ENCODE measurements at regions of chr15 and their contacts with region 1.

Region 1: DNA sequence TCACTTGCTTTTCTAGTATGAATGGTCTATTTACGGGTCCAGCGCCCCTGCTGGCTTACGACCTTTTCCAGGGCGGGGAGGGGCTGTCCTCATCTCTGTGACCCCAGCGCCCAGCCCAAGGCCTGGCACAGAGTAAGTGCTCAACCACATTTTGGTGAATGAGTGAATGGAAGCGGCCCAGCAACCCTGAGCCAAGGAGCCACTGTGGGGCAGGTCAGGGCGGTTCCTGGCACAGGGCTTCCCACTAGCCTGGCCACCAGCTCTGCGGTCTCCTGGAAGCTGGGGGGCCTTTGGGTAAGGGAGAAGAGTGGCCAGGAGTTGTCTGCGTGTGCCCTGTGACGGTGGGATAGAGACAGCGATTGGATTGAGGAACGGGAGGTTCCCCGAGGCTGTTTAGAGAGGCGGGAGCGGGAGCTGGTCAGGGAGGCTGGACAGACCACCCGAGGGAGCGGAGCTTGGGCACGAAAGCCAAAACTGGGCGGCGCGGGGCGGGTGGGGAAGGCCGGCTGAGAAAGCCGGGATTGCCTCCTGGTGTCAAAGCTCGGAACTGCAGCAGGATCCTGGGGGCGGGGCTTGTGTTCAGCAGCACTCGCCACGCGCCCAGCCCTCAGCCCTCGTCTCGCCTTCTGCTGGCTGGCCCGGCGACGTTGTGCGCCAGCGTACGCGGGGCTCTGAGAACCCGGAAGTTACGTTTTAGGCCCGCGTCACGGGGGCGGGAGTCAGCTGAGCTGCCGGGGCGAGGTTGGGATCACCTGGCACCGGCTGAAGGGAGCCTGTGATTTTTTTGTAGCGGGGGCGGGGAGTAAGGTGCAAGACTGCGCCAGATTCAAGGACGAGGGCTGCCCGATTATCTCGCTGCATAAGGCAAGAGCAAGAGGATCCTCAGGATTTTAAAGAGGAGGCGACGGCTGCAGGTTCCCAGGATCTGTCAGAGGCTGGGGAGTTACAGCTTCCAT is at the start of gene VPS18:
- DNase-seq: peak; percentile 97 to 98
- ATAC-seq: peak; percentile 88 to 95
- H3K4me3 ChIP-seq: peak within 1 kb of the TSS; percentile 85 to 94 (median 92)
- H3K27ac ChIP-seq: peak within 1 kb of the TSS; percentile 91 to 98 (median 98)
- H3K4me1 ChIP-seq: peaks cover 13 to 17% of the 10 kb centered on the region in 2 donors
- H3K27me3 ChIP-seq: no peaks in the 10 kb centered on the region
- CTCF ChIP-seq: peak; percentile 97 to 99 (median 99)
- POLR2A ChIP-seq: peak; percentile 90 to 92
- total RNA-seq, gene VPS18: 18.5 to 26.1 (median 19.3) TPM

Region 2: DNA sequence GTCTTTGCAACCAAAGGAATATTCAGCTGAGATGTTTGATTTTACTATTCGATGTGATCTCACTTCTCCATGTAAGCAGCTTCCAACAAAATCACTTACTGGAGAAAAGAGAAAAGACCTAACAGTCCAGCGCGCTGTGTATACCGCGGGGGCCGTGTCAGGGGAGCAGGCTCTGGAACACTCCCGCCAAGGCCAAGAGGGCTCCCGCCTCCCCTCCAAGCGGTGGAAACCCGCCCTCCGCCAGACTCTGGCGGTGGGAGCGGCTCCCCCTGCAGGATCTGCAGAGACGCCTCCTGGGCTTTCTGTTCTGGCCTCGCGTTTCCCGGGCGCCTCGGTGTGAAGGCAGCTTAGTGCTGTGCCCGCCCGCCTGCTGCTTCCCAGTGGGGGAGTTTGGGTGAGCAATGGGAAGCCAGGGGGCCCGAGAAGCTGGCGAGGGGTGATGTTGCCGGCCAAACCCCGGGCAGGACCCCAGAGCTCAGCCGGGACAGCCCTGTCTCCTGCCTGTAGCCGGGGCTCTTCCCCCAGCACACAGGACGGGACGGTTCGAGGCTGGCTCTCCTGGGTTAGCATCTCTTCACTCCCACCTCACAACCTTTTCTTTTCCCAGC is 386.9 kb before region 1 on chr15:
- in situ Hi-C with region 1: loop called in 1 of 4 experiments (anchors 25 kb)
- intact Hi-C with region 1: no loop called
- DNase-seq: peak; percentile 42 to 56
- ATAC-seq: peak; percentile 53 to 71
- H3K4me3 ChIP-seq: peak overlapping the region; percentile 35 to 52 (median 44)
- H3K27ac ChIP-seq: peak overlapping the region in 2 of 4 donors; percentile 33 to 35
- H3K4me1 ChIP-seq: peaks cover 6 to 20% of the 10 kb centered on the region in 2 donors
- H3K27me3 ChIP-seq: no peaks in the 10 kb centered on the region
- CTCF ChIP-seq: peak; percentile 21 to 85 (median 48)
- POLR2A ChIP-seq: no peak

Region 3: DNA sequence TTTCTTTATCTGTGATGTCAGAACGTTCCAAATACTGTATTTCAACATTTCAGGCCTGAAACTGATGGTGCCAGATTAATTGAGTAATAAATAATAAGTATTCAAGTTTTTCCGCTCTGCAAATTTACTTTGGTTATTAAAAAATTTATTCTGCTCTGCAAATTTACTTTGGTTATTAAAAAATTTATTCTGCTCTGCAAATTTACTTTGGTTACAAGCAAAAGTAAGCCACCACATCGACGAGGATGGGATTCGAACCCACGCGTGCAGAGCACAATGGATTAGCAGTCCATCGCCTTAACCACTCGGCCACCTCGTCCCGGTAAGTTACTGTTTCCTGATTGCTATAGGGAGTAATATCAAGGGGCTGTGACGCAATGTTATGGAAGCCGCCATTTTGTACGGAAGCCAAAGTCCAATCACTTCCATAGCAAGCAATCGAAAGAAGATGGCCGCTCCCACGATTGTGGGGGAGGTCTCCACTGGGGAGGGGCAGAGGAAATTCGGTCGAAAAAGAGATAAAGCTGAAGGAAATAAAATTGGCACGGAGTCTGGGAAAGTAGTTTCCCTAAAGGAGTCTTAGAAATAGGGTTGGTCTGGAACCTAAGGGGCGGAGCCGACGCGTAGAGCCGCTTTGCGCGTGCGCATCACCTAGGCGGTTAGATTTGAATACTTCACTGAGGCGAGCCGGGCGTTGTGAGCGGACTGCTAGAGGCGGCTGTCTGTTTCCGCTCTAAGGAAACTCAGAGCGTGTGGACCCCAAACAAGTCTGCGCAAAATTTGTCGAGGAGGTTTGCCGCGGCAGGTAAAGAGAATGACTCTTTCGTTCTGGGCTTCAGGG is 300.2 kb before region 1 on chr15 and contains the start of gene KNL1:
- in situ Hi-C with region 1: loop called in 2 of 4 experiments (anchors 10 kb)
- intact Hi-C with region 1: loop called (anchors 5 kb)
- DNase-seq: peak; percentile 83 to 91
- ATAC-seq: peak; percentile 97 to 98
- H3K4me3 ChIP-seq: peak within 1 kb of the TSS; percentile 72 to 88 (median 82)
- H3K27ac ChIP-seq: peak within 1 kb of the TSS; percentile 88 to 97 (median 93)
- H3K4me1 ChIP-seq: peaks cover 9% of the 10 kb centered on the region in 2 donors
- H3K27me3 ChIP-seq: no peaks in the 10 kb centered on the region
- CTCF ChIP-seq: no peak
- POLR2A ChIP-seq: no peak
- total RNA-seq, gene KNL1: 0.10 to 0.33 (median 0.33) TPM in 3 of 4 donors, not detected in the other

Region 4: DNA sequence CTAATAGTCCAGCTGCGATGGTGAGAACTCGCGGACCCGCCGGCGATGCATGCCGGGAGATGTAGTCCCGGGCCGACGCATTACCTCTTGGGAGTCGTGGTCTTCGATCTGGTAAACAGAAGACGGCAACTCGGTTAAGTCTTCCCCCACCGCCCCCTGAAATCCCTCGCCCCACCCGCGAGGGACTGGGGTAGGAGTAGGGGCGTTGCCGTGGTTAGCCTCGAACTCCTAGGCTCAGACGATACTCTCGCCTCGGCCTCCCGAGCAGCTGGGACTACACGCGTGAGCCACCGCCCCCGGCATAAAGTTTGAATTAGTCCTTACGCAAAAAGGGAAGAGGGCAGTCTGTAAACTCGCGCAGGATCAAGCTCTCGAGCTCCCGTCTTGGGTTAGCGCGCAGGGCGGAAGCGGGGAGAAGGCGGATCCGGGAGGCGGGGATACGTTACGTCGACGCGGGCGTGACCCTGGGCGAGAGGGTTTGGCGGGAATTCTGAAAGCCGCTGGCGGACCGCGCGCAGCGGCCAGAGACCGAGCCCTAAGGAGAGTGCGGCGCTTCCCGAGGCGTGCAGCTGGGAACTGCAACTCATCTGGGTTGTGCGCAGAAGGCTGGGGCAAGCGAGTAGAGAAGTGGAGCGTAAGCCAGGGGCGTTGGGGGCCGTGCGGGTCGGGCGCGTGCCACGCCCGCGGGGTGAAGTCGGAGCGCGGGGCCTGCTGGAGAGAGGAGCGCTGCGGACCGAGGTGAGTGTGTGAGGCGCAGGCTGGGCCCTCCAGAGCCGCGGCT is 199.1 kb before region 1 on chr15 and contains the start of gene RAD51:
- in situ Hi-C with region 1: loop called in 1 of 4 experiments (anchors 10 kb)
- intact Hi-C with region 1: loop called (anchors 5 kb)
- DNase-seq: peak; percentile 80 to 86
- ATAC-seq: peak; percentile 98
- H3K4me3 ChIP-seq: peak within 1 kb of the TSS; percentile 92 to 99 (median 94)
- H3K27ac ChIP-seq: peak within 1 kb of the TSS; percentile 99 to 100 (median 100)
- H3K4me1 ChIP-seq: peaks cover 16 to 20% of the 10 kb centered on the region in 2 donors
- H3K27me3 ChIP-seq: no peaks in the 10 kb centered on the region
- CTCF ChIP-seq: no peak
- POLR2A ChIP-seq: peak; percentile 39 to 46
- total RNA-seq, gene RAD51: 0.56 to 0.75 (median 0.60) TPM in 3 of 4 donors, not detected in the other

Region 5: GRCh38 chr15:40807028-40807887 is 86.8 kb before region 1 on chr15 and contains the starts of genes DNAJC17 and ZFYVE19:
- in situ Hi-C with region 1: no loop called
- intact Hi-C with region 1: loop called (anchors 10 kb)
- DNase-seq: peak; percentile 97
- ATAC-seq: peak; percentile 98 to 99
- H3K4me3 ChIP-seq: peak within 1 kb of the TSS; percentile 87 to 100 (median 94)
- H3K27ac ChIP-seq: peak within 1 kb of the TSS; percentile 96 to 100 (median 97)
- H3K4me1 ChIP-seq: peaks cover 19 to 34% of the 10 kb centered on the region in 2 donors
- H3K27me3 ChIP-seq: no peaks in the 10 kb centered on the region
- CTCF ChIP-seq: peak in 1 of 5 experiments; percentile 30
- POLR2A ChIP-seq: peak; percentile 62 to 66
- total RNA-seq, gene DNAJC17: 5.3 to 25.0 (median 11.4) TPM
- total RNA-seq, gene ZFYVE19: 11.4 to 18.9 (median 14.7) TPM

Region 6: DNA sequence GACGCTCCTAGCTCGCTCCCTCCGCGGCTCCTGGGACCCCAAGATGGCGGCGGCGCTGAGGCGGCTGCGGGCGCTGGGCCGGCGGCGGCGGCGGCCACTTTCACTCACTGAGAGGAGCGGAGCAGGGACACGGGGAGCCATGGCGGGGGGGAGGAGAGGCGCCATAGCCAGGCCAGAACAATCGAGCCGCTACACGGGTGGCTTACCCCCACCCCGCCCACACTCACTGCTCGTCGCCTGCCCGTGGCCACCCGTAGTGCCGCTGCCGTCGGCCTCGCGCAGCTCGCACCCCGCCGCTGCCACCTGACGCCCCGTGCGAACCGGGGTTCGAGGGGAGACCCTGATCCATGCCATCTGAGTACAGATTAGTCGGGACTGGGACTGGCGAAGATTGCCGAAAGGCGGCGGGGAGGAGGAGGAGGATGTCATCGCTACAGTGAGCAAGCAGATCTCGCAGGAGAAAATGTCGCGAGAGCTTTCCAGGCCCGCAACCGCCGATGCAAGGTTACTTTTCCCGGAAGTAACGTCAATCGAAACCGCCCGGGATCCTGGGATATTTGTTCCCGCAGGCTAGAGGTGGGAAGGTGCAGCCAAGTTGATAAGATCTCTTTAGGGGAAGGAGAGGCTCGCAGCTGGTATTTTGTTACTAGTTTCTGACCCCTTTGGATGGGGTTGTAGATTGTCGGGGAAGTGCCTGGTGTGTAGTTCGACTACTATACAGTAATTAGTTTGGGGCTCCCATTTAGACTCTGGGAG is 222.3 kb after region 1 on chr15 and contains the start of gene INO80:
- in situ Hi-C with region 1: no loop called
- intact Hi-C with region 1: loop called (anchors 1 kb)
- DNase-seq: peak; percentile 98
- ATAC-seq: peak; percentile 93 to 94
- H3K4me3 ChIP-seq: peak within 1 kb of the TSS; percentile 81 to 97 (median 90)
- H3K27ac ChIP-seq: peak within 1 kb of the TSS; percentile 97 to 100 (median 100)
- H3K4me1 ChIP-seq: peaks cover 10 to 24% of the 10 kb centered on the region in 2 donors
- H3K27me3 ChIP-seq: no peaks in the 10 kb centered on the region
- CTCF ChIP-seq: peak in 1 of 5 experiments; percentile 32
- POLR2A ChIP-seq: peak; percentile 74 to 77
- total RNA-seq, gene INO80: 25.5 to 33.0 (median 27.8) TPM

Measured in gastrocnemius medialis (tissue), 4 donors.